CD8-positive, alpha-beta T cell (primary cell): ENCODE measurements at regions of chr11 and their contacts with region 1.

Region 1: DNA sequence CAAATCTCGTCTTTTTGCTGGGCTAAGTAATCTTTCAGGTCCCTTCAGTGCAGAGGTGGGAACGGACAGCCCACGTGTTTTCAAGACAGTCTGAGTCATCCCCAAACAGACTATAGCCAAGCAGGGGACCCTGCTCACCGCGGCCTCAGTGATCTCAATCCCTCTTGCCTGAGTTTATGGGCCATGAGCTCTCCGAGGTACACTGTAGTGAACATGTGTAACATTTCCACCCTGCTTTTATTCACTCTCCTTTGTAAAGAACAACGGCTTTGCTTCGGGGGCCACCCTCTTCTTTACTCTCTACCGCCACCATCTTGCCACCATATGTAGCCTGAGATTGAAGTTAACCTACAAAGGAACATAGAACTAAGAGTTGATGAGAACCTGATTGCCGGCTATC is 11.5 kb upstream of the KCTD14 start:
- DNase-seq: no peak
- ATAC-seq: no peak
- H3K4me3 ChIP-seq: no peak overlapping the region
- H3K4me3 Mint-ChIP-seq: no peak overlapping the region
- H3K27ac ChIP-seq: no peak overlapping the region
- H3K27ac Mint-ChIP-seq: no peak overlapping the region
- H3K4me1 ChIP-seq: peaks cover 2% of the 10 kb centered on the region
- H3K4me1 Mint-ChIP-seq: peaks cover 2% of the 10 kb centered on the region
- H3K27me3 ChIP-seq: no peaks in the 10 kb centered on the region
- H3K27me3 Mint-ChIP-seq: no peaks in the 10 kb centered on the region
- CTCF ChIP-seq: no peak

Region 2: GRCh38 chr11:78011301-78011700 is 23.3 kb before region 1 on chr11:
- CTCF ChIA-PET with region 1: no interaction called
- POLR2A ChIA-PET with region 1: no interaction called
- intact Hi-C with region 1: no loop called
- DNase-seq: no peak
- ATAC-seq: no peak
- H3K4me3 ChIP-seq: no peak overlapping the region
- H3K4me3 Mint-ChIP-seq: no peak overlapping the region
- H3K27ac ChIP-seq: no peak overlapping the region
- H3K27ac Mint-ChIP-seq: no peak overlapping the region
- H3K4me1 ChIP-seq: no peaks in the 10 kb centered on the region
- H3K4me1 Mint-ChIP-seq: no peaks in the 10 kb centered on the region
- H3K27me3 ChIP-seq: no peaks in the 10 kb centered on the region
- H3K27me3 Mint-ChIP-seq: no peaks in the 10 kb centered on the region
- CTCF ChIP-seq: no peak

Region 3: DNA sequence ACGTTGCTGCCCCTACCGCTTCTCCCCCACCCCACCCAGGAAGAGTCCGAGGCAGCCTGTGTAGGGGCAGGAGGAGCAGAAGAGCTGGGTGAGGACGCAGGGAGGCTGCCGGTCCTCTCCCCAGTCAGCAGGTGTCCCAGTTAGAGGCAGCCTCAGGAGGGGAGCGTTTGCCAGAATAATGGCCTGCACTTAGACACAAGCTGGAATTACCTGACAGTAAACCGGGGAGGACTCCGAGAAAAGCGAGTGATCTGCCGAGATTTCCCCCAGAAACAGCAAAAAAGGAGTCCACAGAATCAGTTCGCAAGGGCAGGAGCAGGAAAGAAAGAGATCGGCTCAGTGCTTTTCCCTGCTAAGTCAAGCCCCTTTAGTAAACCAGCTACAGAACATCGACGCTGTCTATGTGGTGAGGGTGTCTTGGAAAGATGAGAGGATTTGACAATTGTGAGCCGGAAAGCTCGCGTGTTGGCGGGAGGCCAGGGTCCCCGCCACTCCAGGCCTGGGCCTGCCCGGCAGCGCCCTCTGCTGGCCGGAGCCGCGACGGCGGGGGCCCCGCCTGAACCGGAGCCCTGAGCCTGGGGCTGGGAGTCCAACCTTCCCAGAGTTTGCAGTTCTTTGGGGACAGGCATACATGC is 11.3 kb after region 1 on chr11:
- CTCF ChIA-PET with region 1: interaction called, 10 read pairs
- POLR2A ChIA-PET with region 1: no interaction called
- intact Hi-C with region 1: no loop called
- DNase-seq: peak; percentile 58 to 90 (median 78)
- ATAC-seq: peak; percentile 95
- H3K4me3 ChIP-seq: peak overlapping the region; percentile 15 to 48
- H3K4me3 Mint-ChIP-seq: peak overlapping the region; percentile 63
- H3K27ac ChIP-seq: no peak overlapping the region
- H3K27ac Mint-ChIP-seq: no peak overlapping the region
- H3K4me1 ChIP-seq: peaks cover 5% of the 10 kb centered on the region
- H3K4me1 Mint-ChIP-seq: peaks cover 13% of the 10 kb centered on the region
- H3K27me3 ChIP-seq: no peaks in the 10 kb centered on the region
- H3K27me3 Mint-ChIP-seq: no peaks in the 10 kb centered on the region
- CTCF ChIP-seq: peak; percentile 97